ENCODE measurements at regions of chr2 and their contacts with region 1.

Region 1: DNA sequence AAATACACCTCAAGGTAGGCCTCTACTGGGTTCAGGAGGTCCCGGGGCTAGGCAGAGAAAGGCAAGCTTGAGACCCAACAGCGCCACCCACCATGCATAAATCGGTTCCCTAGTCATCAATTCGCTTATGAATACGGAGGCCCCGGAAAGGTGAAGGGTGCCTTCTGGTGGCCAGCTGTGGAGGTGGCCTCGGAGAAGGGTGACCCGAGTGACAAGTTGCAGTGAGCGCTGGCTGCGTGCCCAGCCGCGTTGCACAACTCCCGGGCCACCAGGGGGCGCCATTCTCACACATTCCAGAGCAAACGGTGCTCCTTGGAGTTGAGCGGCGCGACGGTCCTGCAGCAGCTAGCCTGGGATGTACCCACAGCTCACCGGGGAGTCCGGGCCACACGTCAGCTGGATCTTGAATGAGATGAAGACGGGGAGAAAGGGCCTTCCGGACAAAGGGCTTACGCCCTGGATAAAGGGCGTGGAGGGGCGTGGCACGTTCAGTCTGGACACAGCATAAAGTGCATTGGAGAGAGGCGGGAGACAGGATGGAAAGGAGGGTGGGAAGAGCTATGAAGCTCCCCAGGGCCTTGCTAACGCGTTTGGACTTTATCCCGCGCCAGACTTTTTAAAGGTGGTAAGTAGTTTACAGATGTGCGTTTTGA is 20.4 kb downstream of the TMSB10 start:
- DNase-seq: peak; percentile 86 to 99 (median 88)
- ATAC-seq: peak; percentile 92
- H3K4me3 ChIP-seq: peak overlapping the region; percentile 41
- H3K27ac ChIP-seq: no peak overlapping the region; the same call in 2 of the 3 replicates
- H3K4me1 ChIP-seq: peaks cover 13 to 19% of the 10 kb centered on the region in 2 experiments
- H3K27me3 ChIP-seq: no peaks in the 10 kb centered on the region; a peak in 1 of 5 replicates
- CTCF ChIP-seq: peak; percentile 99 to 100 (median 99)
- EP300 ChIP-seq: peak; percentile 42; the same call in 1 of the 2 replicates
- POLR2A ChIP-seq: no peak
- RAD21 ChIP-seq: peak; percentile 98 to 99

Region 2: GRCh38 chr2:83850071-83850725 is 1075.7 kb before region 1 on chr2:
- CTCF ChIA-PET with region 1: no interaction called
- POLR2A ChIA-PET with region 1: no interaction called
- in situ Hi-C with region 1: no loop called
- intact Hi-C with region 1: no loop called
- DNase-seq: no peak
- ATAC-seq: no peak
- H3K4me3 ChIP-seq: no peak overlapping the region
- H3K27ac ChIP-seq: no peak overlapping the region
- H3K4me1 ChIP-seq: peaks cover 0 to 3% of the 10 kb centered on the region in 2 experiments; a peak in 1 of 5 replicates
- H3K27me3 ChIP-seq: no peaks in the 10 kb centered on the region
- CTCF ChIP-seq: no peak
- EP300 ChIP-seq: no peak
- POLR2A ChIP-seq: no peak
- RAD21 ChIP-seq: no peak

Region 3: DNA sequence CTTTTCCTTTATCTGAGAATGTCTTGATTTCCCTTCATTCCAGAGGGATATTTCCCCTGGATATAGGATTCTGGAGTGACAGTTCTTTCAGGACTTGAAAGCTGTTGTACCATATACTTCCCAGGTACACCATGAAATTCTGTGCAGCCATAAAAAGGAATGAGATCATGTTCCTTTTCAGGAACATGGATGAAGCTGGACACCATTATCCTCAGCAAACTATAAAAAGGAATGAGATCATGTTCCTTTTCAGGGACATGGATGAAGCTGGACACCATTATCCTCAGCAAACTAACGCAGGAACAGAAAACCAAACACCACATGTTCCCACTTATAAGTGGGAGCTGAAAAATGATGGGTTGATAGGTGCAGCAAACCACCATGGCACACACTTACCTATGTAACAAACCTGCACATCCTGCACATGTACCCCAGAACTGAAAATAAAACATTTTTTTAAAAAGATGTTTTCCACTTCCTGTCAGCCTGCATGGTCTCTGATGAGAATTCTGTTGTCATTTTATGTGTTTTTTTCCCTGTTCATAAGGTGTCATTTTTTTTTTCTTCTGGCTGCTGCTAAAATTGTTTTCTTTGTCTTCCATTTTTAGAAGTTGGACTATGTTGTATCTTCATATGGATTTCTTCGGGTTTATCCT is 276.2 kb before region 1 on chr2:
- CTCF ChIA-PET with region 1: no interaction called
- POLR2A ChIA-PET with region 1: no interaction called
- in situ Hi-C with region 1: no loop called
- intact Hi-C with region 1: loop called (anchors 10 kb)
- DNase-seq: no peak
- ATAC-seq: no peak
- H3K4me3 ChIP-seq: no peak overlapping the region
- H3K27ac ChIP-seq: no peak overlapping the region
- H3K4me1 ChIP-seq: no peaks in the 10 kb centered on the region
- H3K27me3 ChIP-seq: no peaks in the 10 kb centered on the region
- CTCF ChIP-seq: no peak
- EP300 ChIP-seq: no peak
- POLR2A ChIP-seq: no peak
- RAD21 ChIP-seq: no peak

Region 4: GRCh38 chr2:84881581-84882414 is 44.1 kb before region 1 on chr2:
- CTCF ChIA-PET with region 1: interaction called, 4 read pairs
- POLR2A ChIA-PET with region 1: no interaction called
- in situ Hi-C with region 1: no loop called
- intact Hi-C with region 1: loop called (anchors 1 kb)
- DNase-seq: peak; percentile 63 to 82 (median 66)
- ATAC-seq: peak; percentile 94
- H3K4me3 ChIP-seq: peak overlapping the region; percentile 10; the same call in 1 of the 2 replicates
- H3K27ac ChIP-seq: no peak overlapping the region
- H3K4me1 ChIP-seq: peaks cover 0 to 13% of the 10 kb centered on the region in 2 experiments; a peak in 4 of 5 replicates
- H3K27me3 ChIP-seq: peaks cover 35 to 36% of the 10 kb centered on the region in 2 experiments
- CTCF ChIP-seq: peak; percentile 71 to 82 (median 80)
- EP300 ChIP-seq: no peak
- POLR2A ChIP-seq: no peak
- RAD21 ChIP-seq: peak; percentile 72 to 78

Region 5: DNA sequence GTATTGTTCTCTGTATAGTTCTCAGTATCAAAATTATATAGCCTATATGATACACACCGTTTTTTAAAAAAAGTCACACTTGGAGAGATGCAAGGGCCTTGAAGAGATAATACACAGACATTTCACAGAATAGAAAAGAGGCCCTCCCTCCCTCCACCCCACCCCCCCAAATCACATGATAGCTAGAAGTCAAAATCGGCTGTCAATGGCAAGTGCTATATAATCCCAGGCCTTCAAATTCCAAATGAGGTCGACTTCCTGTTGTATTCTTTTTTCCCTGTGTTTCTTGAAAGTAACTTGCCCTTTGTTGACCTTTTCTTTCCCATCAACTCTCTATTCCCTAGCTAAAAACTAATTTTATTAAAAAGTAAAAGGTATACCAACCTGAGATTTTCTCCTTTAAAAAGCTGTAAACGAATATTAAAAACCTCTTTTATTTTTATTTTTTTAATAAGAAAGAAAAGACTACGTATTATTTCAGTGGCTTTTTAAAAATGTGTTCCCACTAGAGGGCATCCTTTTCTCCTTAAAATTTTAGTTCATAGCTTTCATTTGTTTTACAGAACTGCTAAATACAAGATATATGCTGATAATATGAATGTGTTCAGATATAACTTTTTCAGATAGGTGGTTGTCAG is 91.7 kb after region 1 on chr2:
- CTCF ChIA-PET with region 1: interaction called, 11 read pairs
- POLR2A ChIA-PET with region 1: interaction called, 3 read pairs
- in situ Hi-C with region 1: no loop called
- intact Hi-C with region 1: loop called (anchors 1 kb)
- DNase-seq: peak in 1 of 4 experiments; percentile 25
- ATAC-seq: no peak; the same call in 2 of the 3 replicates
- H3K4me3 ChIP-seq: no peak overlapping the region
- H3K27ac ChIP-seq: peak overlapping the region; percentile 4; the same call in 1 of the 3 replicates
- H3K4me1 ChIP-seq: peaks cover 2 to 4% of the 10 kb centered on the region in 2 experiments; a peak in 3 of 5 replicates
- H3K27me3 ChIP-seq: no peaks in the 10 kb centered on the region
- CTCF ChIP-seq: peak in 2 of 3 experiments; percentile 23 to 51; a peak in 3 of 6 replicates
- EP300 ChIP-seq: no peak
- POLR2A ChIP-seq: no peak
- RAD21 ChIP-seq: no peak

Region 6: GRCh38 chr2:85132834-85133637 is 207.2 kb after region 1 on chr2 and contains the start of gene TCF7L1:
- CTCF ChIA-PET with region 1: no interaction called
- POLR2A ChIA-PET with region 1: no interaction called
- in situ Hi-C with region 1: no loop called
- intact Hi-C with region 1: loop called (anchors 5 kb)
- DNase-seq: peak; percentile 65 to 90 (median 84)
- ATAC-seq: peak; percentile 97
- H3K4me3 ChIP-seq: peak within 1 kb of the TSS; percentile 40
- H3K27ac ChIP-seq: no peak within 1 kb of the TSS
- H3K4me1 ChIP-seq: peaks cover 0 to 18% of the 10 kb centered on the region in 2 experiments; a peak in 2 of 5 replicates
- H3K27me3 ChIP-seq: peaks cover 18 to 47% of the 10 kb centered on the region in 2 experiments
- CTCF ChIP-seq: peak; percentile 48 to 74 (median 51)
- EP300 ChIP-seq: no peak
- POLR2A ChIP-seq: no peak
- RAD21 ChIP-seq: peak in 1 of 2 experiments; percentile 49; a peak in 2 of 4 replicates
- polyA plus RNA-seq, gene TCF7L1: 0.04 TPM in 1 of 2 experiments, not detected in the other

Region 7: DNA sequence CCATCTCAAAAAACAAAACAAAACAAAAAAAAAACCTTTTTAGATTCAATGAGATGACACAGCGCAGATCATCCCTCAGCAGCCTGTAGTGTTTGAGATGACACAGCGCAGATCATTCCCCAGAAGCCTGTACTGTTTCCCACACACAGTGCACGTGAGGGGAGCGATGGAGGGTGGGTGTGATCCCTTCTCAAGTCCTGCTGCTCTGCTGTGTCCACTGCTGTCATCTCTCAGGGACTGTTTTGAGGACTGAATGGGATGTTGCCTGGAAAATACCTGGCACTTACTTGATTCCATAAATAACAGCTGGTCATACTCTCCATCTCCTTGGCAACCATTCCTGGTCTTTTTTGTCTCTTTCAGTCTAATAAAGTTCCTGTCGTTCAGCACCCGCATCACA is 376.3 kb after region 1 on chr2:
- CTCF ChIA-PET with region 1: interaction called, 9 read pairs
- POLR2A ChIA-PET with region 1: no interaction called
- in situ Hi-C with region 1: loop called (anchors 10 kb)
- intact Hi-C with region 1: loop called (anchors 1 kb)
- DNase-seq: no peak
- ATAC-seq: peak; percentile 13; the same call in 1 of the 3 replicates
- H3K4me3 ChIP-seq: no peak overlapping the region
- H3K27ac ChIP-seq: no peak overlapping the region
- H3K4me1 ChIP-seq: peaks cover 3 to 20% of the 10 kb centered on the region in 2 experiments; a peak in 3 of 5 replicates
- H3K27me3 ChIP-seq: peaks cover 27 to 53% of the 10 kb centered on the region in 2 experiments; a peak in 4 of 5 replicates
- CTCF ChIP-seq: no peak
- EP300 ChIP-seq: no peak
- POLR2A ChIP-seq: no peak
- RAD21 ChIP-seq: no peak

Measured in K562 (cell line).